Sigmoid colon (tissue), 7 donors: ENCODE measurements at regions of chr4 and their contacts with region 1.

Region 1: DNA sequence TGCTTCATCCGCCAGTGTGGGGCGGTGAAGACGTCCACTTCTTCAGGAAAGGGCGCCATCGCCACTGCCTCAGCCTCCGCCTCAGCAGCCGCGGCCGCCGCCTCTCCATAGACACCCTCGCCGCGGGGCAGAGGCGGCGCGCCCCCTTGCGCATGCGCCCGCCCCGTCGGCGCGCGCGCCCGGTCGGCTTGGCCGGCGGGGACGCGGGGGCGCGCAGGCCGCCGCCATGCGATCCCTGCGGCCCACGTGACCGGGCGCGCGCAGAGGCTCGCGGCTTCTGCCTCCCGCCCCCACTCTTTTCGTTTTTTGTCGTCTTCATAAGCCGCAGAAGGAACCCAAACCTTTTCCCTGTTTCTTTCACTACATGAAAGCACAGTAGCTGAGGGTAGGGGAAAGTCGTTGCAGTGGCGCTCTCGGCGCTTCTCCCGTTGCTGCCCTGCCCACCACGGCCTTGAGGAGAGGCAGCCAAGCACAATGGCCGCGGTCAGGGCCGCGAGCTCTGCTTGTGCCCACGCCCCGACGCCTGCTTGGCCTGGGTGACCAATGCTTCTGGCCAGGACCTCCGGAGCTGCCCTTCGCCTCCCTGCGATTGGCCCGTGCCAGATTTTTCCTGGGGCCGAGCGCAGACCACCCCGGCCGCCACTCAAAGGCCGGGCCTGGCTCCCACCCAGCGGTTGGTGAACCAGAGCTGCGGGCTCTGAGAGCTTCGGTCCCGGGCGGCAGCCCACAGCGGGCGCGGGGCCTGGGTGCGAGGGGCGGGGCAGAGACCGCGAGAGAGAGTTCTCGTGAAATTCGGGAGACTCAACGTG is at the start of gene FBXL5:
- DNase-seq: peak; percentile 87
- H3K4me3 ChIP-seq: peak within 1 kb of the TSS; percentile 74 to 90 (median 82)
- H3K27ac ChIP-seq: peak within 1 kb of the TSS; percentile 94 to 99 (median 96)
- H3K4me1 ChIP-seq: peaks cover 0 to 44% (median 40%) of the 10 kb centered on the region in 4 donors
- H3K27me3 ChIP-seq: no peaks in the 10 kb centered on the region
- CTCF ChIP-seq: no peak
- EP300 ChIP-seq: no peak
- POLR2A ChIP-seq: peak; percentile 40 to 53
- total RNA-seq, gene FBXL5: 134 to 271 (median 202) TPM

Region 2: DNA sequence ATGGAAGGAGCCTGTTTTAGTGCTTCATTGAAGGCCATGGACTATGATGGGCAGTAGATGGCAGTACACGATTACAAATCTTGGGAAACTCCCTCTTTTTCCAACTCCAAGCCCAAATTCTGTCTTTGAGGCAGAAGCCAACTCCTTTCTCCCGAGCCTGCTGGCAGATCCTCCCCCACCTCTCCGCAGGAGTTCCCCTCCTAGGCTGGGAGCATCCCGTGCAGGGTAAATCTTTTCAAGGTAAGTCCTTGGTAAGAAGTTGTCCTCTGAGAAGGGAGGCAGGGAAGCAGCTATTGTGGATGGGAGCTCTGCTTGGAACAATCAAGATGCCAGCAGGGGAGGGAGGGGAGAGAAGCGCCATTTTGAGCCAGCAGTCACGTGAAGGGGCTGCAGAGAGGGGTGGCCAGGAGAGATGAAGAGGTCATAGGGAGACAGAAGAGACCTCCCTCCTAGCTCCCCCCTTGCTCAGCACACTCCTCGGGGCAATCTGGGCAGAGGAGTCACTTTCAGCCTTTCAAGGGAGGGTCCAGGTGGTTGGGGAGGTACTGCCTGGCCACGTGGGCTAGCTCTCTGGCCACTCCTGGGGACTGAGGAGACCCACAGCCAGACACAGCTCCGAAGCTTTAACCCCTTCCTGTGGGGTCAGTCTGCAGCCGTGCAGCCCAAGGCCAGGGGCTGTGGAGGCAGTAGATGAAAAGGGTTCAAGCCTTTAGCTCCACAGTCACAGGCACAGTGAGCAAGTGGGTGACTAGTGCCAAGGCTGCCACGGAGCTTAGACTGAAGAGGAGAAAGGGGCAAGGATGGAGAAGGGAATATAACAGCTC is 176.1 kb before region 1 on chr4:
- intact Hi-C with region 1: loop called (anchors 2 kb)
- DNase-seq: peak; percentile 78
- H3K4me3 ChIP-seq: peak overlapping the region; percentile 31 to 49 (median 40)
- H3K27ac ChIP-seq: peak overlapping the region; percentile 75 to 88 (median 82)
- H3K4me1 ChIP-seq: peaks cover 0 to 22% (median 19%) of the 10 kb centered on the region in 4 donors
- H3K27me3 ChIP-seq: no peaks in the 10 kb centered on the region
- CTCF ChIP-seq: peak; percentile 38 to 60 (median 45)
- EP300 ChIP-seq: no peak
- POLR2A ChIP-seq: no peak

Region 3: GRCh38 chr4:15489551-15489950 is 165.9 kb before region 1 on chr4:
- intact Hi-C with region 1: no loop called
- DNase-seq: no peak
- H3K4me3 ChIP-seq: no peak overlapping the region
- H3K27ac ChIP-seq: peak overlapping the region in 1 of 4 donors; percentile 42
- H3K4me1 ChIP-seq: peaks cover 0 to 11% (median 4%) of the 10 kb centered on the region in 4 donors
- H3K27me3 ChIP-seq: no peaks in the 10 kb centered on the region
- CTCF ChIP-seq: no peak
- EP300 ChIP-seq: no peak
- POLR2A ChIP-seq: no peak

Region 4: DNA sequence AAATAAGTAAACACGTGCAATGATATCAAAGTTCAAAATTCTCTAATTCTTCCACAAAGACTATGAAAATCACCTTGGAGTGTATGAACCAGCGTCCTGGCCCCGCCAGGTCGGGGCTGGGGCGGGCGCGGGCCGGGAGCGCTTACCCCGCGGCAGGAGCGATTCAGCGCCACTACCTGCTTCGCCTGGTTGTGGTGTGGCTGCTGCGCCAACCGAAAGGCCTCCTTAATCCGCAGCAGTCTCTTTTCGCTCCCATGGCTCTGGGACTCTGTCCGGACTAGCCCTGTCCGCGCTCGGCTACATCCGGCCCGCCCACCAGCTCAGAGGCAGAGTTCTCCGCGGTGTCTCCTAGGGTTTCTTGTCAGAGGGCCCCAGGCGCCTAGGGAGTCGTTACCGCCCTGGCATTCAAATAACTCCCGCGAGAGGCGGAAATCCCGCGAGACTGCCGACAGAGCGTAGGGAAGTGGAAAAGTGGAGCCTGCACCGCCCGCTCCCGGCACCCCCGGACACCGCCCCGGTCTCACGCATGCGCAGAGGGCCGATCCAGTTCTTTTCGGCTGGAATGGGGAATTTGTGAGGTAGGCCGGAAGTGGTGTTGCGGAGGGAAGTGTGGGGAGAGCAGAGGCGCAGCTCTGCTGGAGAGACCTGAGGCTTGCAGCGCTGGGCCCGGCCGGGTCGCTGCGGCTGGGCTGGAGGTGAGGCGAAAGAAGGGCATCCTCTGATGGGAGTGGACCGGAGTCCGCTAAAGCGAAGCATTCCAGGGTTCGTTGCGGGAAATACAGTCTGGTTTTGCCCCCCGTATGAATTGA is 26.0 kb after region 1 on chr4 and contains the start of gene FAM200B:
- intact Hi-C with region 1: loop called (anchors 2 kb)
- DNase-seq: peak; percentile 99
- H3K4me3 ChIP-seq: peak within 1 kb of the TSS; percentile 62 to 81 (median 72)
- H3K27ac ChIP-seq: peak within 1 kb of the TSS; percentile 82 to 94 (median 88)
- H3K4me1 ChIP-seq: peaks cover 0 to 28% (median 19%) of the 10 kb centered on the region in 4 donors
- H3K27me3 ChIP-seq: no peaks in the 10 kb centered on the region
- CTCF ChIP-seq: peak in 3 of 4 experiments; percentile 6 to 22 (median 19)
- EP300 ChIP-seq: no peak
- POLR2A ChIP-seq: peak; percentile 71 to 84
- total RNA-seq, gene FAM200B: 45.1 to 105 (median 72.2) TPM

Region 5: GRCh38 chr4:16225863-16226815 is 570.7 kb after region 1 on chr4 and contains the start of gene TAPT1:
- intact Hi-C with region 1: loop called (anchors 2 kb)
- DNase-seq: peak; percentile 89
- H3K4me3 ChIP-seq: peak within 1 kb of the TSS; percentile 60 to 85 (median 68)
- H3K27ac ChIP-seq: peak within 1 kb of the TSS; percentile 93 to 99 (median 96)
- H3K4me1 ChIP-seq: peaks cover 0 to 53% (median 43%) of the 10 kb centered on the region in 4 donors
- H3K27me3 ChIP-seq: no peaks in the 10 kb centered on the region
- CTCF ChIP-seq: no peak
- EP300 ChIP-seq: no peak
- POLR2A ChIP-seq: no peak
- total RNA-seq, gene TAPT1: 29.4 to 43.8 (median 37.1) TPM